GM12878 (cell line): ENCODE measurements at regions of chr12 and their contacts with region 1.

Region 1: DNA sequence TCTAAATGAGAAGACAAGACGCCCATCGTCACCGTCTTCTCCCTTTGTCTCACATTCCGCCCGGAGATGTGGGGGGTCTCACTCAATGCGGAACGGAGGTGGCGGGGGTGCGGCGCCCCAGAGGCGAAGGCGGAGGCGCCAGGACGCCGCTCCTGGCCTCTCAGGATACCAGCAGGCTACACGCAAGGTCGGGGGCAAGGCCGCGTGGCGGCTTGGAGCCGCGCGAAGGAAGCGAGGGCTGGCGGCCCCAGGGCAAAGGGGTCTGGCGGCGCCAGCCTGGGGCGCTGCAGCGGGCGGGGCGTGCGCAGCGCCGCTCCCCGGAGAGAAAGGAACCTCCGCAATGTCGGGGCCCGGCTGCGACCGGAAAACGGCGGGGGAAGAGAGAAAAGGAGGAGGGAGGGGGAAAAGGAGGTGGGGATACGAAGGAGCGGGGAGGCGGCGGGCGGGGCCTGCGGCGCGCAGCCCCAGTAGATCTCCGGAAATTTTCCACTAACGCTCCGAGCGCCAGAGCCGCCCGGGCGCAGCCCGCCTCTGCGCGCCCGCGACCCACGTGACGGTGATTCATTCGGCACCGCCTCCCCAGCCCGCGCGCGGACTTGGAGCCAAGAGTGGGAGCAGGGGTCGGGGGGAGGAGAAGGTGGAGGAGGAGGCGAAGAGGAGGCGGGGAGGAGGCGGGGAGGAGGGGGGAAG is 10.5 kb upstream of the SLC38A2 start:
- DNase-seq: peak; percentile 81
- ATAC-seq: peak; percentile 80
- H3K4me3 ChIP-seq: peak overlapping the region; percentile 80
- H3K27ac ChIP-seq: peak overlapping the region; percentile 89
- H3K4me1 ChIP-seq: peaks cover 23% of the 10 kb centered on the region
- H3K27me3 ChIP-seq: no peaks in the 10 kb centered on the region
- CTCF ChIP-seq: peak; percentile 19 to 39 (median 34); a peak in 4 of 6 replicates
- EP300 ChIP-seq: no peak; a peak in 2 of 4 replicates
- POLR2A ChIP-seq: peak; percentile 81
- RAD21 ChIP-seq: peak; percentile 39

Region 2: DNA sequence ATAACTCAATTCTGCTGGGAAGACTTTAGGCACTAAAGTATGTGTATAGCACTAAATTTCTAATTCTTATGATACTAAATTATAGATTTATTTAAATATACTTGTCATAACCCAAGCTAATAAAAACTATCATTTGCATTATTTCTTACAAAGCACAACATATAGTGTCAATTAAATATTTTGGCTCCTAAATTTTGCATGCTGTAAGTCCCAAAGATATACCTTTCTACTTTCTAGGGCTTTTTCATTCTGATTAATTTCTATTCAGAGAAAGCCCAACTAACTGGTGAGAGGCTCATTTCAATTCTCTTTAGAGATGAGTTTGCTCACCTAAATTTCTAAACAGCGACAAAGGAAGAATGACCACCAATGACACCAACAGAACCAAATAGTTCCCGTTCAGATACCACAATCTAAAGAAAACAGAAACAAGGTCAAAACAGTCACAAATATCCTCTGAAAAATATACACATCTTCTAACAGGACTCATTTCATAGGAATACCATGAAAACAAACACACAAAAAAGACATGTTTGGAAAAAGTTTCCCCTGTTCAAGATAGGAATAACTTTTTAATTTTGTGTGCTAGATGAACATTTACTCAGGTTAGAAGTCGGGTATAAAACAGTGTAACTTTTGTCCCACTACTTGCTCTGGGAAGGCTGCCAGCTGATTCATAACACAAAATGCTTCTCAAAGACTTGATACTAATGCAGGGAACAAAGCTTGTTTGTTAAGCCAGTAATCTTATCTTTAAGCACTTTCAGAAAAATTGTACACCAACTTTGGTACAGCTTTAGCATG is 18.1 kb before region 1 on chr12:
- CTCF ChIA-PET with region 1: interaction called, 13 read pairs
- POLR2A ChIA-PET with region 1: interaction called, 12 read pairs
- RAD21 ChIA-PET with region 1: interaction called, 19 read pairs
- SMC1A ChIA-PET with region 1: interaction called, 30 read pairs
- in situ Hi-C with region 1: no loop called
- intact Hi-C with region 1: no loop called
- DNase-seq: no peak
- ATAC-seq: peak; percentile 37
- H3K4me3 ChIP-seq: peak overlapping the region; percentile 34; the same call in 1 of the 2 replicates
- H3K27ac ChIP-seq: peak overlapping the region; percentile 22
- H3K4me1 ChIP-seq: peaks cover 37% of the 10 kb centered on the region
- H3K27me3 ChIP-seq: no peaks in the 10 kb centered on the region
- CTCF ChIP-seq: no peak
- EP300 ChIP-seq: 0 out of 4 replicates have a peak, but pooled peaks of 1 of the 2 experiments have one; percentile 42
- POLR2A ChIP-seq: no peak
- RAD21 ChIP-seq: no peak

Region 3: DNA sequence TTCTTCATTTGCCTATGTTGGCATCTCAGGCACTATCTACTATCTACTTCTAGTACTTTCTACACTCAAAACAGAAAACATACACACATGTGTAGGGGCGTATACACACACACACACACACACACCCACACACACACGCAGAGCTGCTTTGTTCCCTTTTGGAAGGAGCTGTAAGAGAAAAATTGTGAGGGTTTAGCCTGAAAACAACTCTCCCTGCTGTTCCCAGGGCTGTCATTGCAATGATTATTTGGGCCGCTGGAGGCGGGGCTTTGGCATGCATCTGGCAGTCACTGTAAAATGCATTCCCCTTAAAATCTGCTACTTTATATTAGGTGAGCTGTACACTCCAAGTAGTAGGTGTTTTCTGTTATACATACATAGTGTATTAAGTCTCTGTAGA is 18.6 kb after region 1 on chr12:
- CTCF ChIA-PET with region 1: interaction called, 3 read pairs
- POLR2A ChIA-PET with region 1: interaction called, 4 read pairs
- RAD21 ChIA-PET with region 1: interaction called, 5 read pairs
- SMC1A ChIA-PET with region 1: interaction called, 13 read pairs
- in situ Hi-C with region 1: no loop called
- intact Hi-C with region 1: no loop called
- DNase-seq: no peak
- ATAC-seq: no peak
- H3K4me3 ChIP-seq: no peak overlapping the region
- H3K27ac ChIP-seq: no peak overlapping the region
- H3K4me1 ChIP-seq: peaks cover 15% of the 10 kb centered on the region
- H3K27me3 ChIP-seq: no peaks in the 10 kb centered on the region
- CTCF ChIP-seq: no peak
- EP300 ChIP-seq: no peak
- POLR2A ChIP-seq: no peak
- RAD21 ChIP-seq: no peak

Region 4: GRCh38 chr12:46473634-46474329 is 90.7 kb after region 1 on chr12:
- CTCF ChIA-PET with region 1: interaction called, 9 read pairs
- POLR2A ChIA-PET with region 1: interaction called, 6 read pairs
- RAD21 ChIA-PET with region 1: interaction called, 25 read pairs
- SMC1A ChIA-PET with region 1: interaction called, 56 read pairs
- in situ Hi-C with region 1: no loop called
- intact Hi-C with region 1: loop called (anchors 1 kb)
- DNase-seq: peak; percentile 51
- ATAC-seq: peak; percentile 72
- H3K4me3 ChIP-seq: peak overlapping the region; percentile 30; the same call in 1 of the 2 replicates
- H3K27ac ChIP-seq: peak overlapping the region; percentile 63
- H3K4me1 ChIP-seq: peaks cover 7% of the 10 kb centered on the region; the same call in 1 of the 2 replicates
- H3K27me3 ChIP-seq: no peaks in the 10 kb centered on the region
- CTCF ChIP-seq: no peak
- EP300 ChIP-seq: peak in 1 of 2 experiments; percentile 65; a peak in 2 of 4 replicates
- POLR2A ChIP-seq: no peak
- RAD21 ChIP-seq: no peak